GM12878 (cell line): ENCODE measurements at regions of chr22 and their contacts with region 1.

Region 1: DNA sequence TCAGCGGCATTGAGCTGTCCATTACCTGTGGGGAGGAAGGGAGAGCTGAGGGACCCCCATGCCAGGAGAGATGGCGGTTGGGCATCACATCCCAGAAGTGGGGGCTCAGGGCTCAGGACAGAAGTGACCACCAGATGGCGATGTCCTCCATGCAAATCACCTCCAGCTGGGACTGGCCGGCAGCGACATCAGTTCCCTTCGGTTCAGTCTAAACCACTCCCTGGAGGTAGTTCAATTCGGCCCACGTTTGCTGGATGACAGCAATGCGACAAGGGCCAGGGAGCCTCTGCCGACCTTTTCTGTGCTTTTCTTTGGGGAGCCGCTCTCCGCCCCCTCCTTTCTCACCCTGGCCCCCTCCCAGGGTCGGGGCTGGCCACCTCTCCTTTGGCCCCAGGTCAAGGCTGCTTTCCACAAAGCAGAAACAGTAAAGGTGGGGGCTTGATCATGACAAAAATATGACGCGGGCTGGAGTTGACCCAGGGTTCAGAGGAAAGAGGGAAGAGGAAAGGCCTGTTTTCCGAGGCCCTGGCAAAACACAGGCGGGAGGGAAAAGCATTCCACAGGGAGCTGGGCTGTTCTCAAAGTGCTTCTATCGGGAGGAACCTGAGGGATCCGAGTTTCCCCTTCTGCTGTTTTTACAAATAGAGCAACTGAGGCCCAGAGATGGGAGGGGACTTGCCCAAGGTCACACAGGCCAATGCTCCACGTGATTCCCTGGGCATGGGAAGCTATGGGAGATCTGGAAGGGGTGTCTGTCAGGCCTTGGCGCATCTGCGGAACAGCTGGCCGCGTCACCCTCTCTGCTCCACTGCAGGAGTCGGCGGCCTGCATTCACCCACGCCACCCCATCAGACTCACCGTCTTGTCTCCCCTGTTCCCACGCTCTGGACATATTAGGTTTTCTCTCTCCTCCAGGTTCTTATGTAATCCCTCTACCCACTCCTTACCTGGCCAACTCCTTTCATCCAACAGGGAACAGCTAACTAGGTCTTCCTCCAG is 54.7 kb downstream of the FBXO7 start:
- DNase-seq: peak; percentile 9
- ATAC-seq: peak; percentile 96
- H3K4me3 ChIP-seq: no peak overlapping the region
- H3K27ac ChIP-seq: no peak overlapping the region
- H3K4me1 ChIP-seq: no peaks in the 10 kb centered on the region
- H3K27me3 ChIP-seq: peaks cover 0 to 2% of the 10 kb centered on the region in 2 experiments; a peak in 1 of 4 replicates
- CTCF ChIP-seq: peak; percentile 65 to 84 (median 77)
- EP300 ChIP-seq: no peak
- POLR2A ChIP-seq: no peak
- RAD21 ChIP-seq: peak; percentile 70

Region 2: GRCh38 chr22:32828150-32828549 is 298.9 kb after region 1 on chr22:
- CTCF ChIA-PET with region 1: interaction called, 11 read pairs
- POLR2A ChIA-PET with region 1: no interaction called
- RAD21 ChIA-PET with region 1: no interaction called
- SMC1A ChIA-PET with region 1: no interaction called
- in situ Hi-C with region 1: no loop called
- intact Hi-C with region 1: no loop called
- DNase-seq: no peak
- ATAC-seq: no peak
- H3K4me3 ChIP-seq: no peak overlapping the region
- H3K27ac ChIP-seq: no peak overlapping the region
- H3K4me1 ChIP-seq: no peaks in the 10 kb centered on the region
- H3K27me3 ChIP-seq: no peaks in the 10 kb centered on the region
- CTCF ChIP-seq: no peak; a peak in 1 of 6 replicates
- EP300 ChIP-seq: no peak
- POLR2A ChIP-seq: no peak
- RAD21 ChIP-seq: no peak

Region 3: DNA sequence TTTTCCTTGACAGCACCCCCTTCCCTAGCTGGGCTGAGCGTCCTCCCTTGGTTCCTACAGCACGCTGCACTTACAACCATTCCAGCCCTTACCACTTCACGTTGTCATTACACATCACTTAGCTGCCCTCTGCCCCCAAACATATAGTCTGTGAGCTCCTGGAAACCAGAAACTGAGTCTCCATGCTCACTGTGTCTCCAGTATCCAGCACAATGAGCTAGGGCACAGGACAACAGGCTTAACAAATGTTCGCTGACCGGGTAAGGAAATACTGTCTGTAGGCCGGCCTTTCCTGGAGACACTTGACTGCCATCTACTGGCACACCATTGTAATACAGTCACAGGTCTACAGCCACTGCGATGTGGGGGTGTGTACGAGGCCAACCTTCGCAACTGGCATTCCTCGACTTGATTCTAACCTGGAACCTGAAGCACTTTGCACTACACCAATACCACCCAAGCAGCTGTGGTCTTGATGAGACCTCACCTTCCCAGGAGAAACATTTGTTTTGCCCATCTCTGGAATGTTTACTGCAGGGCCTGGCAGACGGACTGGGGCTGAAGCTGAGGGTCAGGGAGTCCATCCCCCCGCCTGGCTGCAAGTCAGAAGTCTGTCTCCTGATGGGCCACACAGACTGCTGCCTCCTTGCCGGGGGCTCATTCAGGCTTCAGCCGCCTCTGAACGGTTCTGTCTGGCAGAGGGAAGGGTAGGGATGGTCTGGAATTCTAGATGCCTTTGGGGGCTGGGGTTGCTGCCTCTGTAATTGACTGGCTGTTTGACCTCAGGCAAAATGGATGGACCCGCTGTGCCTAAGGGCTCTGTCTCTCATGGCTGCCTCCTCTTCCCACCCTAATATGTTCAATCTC is 456.8 kb after region 1 on chr22:
- CTCF ChIA-PET with region 1: interaction called, 10 read pairs
- POLR2A ChIA-PET with region 1: no interaction called
- RAD21 ChIA-PET with region 1: interaction called, 3 read pairs
- SMC1A ChIA-PET with region 1: interaction called, 3 read pairs
- in situ Hi-C with region 1: loop called (anchors 5 kb)
- intact Hi-C with region 1: loop called (anchors 5 kb)
- DNase-seq: no peak
- ATAC-seq: peak; percentile 92
- H3K4me3 ChIP-seq: no peak overlapping the region
- H3K27ac ChIP-seq: no peak overlapping the region
- H3K4me1 ChIP-seq: no peaks in the 10 kb centered on the region
- H3K27me3 ChIP-seq: no peaks in the 10 kb centered on the region
- CTCF ChIP-seq: peak; percentile 71 to 83 (median 74); a peak in 5 of 6 replicates
- EP300 ChIP-seq: no peak
- POLR2A ChIP-seq: no peak
- RAD21 ChIP-seq: peak; percentile 61